Heart left ventricle (tissue), 16 donors: ENCODE measurements at regions of chr1 and their contacts with region 1.

Region 1: GRCh38 chr1:227299241-227299627 is 19.1 kb downstream of the CDC42BPA start:
- DNase-seq: no peak
- ATAC-seq: peak in 1 of 4 donors; percentile 53
- H3K4me3 ChIP-seq: peak overlapping the region in 4 of 12 donors; percentile 2 to 32 (median 8)
- H3K27ac ChIP-seq: peak overlapping the region in 9 of 12 donors; percentile 6 to 53 (median 31)
- H3K4me1 ChIP-seq: peaks cover 0 to 41% (median 17%) of the 10 kb centered on the region in 12 donors
- H3K27me3 ChIP-seq: no peaks in the 10 kb centered on the region
- CTCF ChIP-seq: no peak
- POLR2A ChIP-seq: no peak

Region 2: DNA sequence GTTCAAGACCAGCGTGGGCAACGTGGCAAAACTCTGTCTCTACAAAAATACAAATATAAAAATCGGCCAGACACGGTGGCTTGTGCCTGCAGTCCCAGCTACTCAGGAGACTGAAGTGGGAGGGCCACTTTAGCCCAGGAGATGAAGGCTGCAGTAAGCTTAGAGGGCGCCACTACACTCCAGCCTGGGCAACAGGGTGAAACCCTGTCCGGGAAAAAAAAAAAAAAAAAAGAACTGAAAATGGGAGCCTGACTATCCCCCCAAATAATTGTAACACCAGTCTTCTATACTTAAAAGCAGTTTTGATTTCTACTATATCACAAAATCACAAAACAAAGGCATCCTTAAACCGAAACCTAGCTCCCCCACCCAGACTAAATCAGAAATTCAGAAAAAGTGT is 41.3 kb before region 1 on chr1:
- intact Hi-C with region 1: loop called in 1 of 10 experiments (anchors 5 kb)
- DNase-seq: no peak
- ATAC-seq: no peak
- H3K4me3 ChIP-seq: no peak overlapping the region
- H3K27ac ChIP-seq: no peak overlapping the region
- H3K4me1 ChIP-seq: peaks cover 0 to 27% (median 6%) of the 10 kb centered on the region in 12 donors
- H3K27me3 ChIP-seq: no peaks in the 10 kb centered on the region
- CTCF ChIP-seq: no peak
- POLR2A ChIP-seq: no peak